G401 (cell line): ENCODE measurements at regions of chr17 and their contacts with region 1.

Region 1: DNA sequence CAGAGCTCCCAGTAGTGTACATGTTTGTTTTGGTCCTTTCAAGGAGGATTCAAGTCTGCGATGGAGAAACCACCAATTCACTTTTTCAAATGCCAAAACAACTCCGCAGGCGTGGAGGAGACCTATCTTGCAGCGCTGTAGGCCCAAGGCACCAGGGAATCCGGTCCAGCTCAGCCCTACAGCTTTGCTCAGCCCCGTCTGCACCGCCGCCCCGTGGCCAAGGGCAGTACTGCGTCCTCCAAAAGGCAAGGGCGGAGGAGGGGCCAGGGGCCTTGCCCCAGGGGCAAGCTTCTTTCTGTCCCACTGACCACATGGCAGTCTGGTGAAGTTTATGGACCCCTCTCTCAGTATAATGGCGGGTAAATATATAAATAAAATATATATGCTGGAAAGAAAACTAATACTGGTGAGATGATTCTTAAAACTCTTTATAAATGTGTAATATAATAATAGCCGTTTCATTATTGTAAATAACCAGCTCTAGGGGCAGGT is 709 bp upstream of the CD300LG start:
- DNase-seq: peak; percentile 85

Region 2: DNA sequence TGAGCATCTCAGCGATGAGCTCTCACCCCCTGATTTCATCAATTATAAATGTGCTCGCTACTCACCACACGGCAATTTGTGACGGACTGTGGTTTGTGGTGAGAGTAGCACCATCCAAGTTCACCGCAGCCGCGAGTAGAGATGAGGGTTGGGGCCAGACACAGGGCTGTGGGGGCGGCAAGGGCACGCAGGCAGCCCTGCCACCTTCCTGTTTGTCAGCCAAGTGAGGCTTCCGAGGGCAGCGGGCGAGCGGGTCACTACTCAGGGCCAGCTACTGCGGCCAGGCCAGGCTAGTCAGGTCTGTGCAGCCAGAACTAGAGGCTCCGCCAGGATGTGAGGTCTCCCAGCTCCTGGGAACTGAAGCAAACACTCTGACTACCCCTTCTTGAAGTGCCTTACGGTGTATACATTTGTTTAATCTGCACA is 144.9 kb before region 1 on chr17:
- in situ Hi-C with region 1: loop called (anchors 10 kb)
- DNase-seq: no peak